AG04450 (cell line): ENCODE measurements at regions of chr1 and their contacts with region 1.

Region 1: GRCh38 chr1:173867753-173868265 is at the start of gene GAS5:
- DNase-seq: peak; percentile 99
- H3K4me3 ChIP-seq: peak within 1 kb of the TSS; percentile 95
- H3K27ac ChIP-seq: peak within 1 kb of the TSS; percentile 79
- H3K27me3 ChIP-seq: no peaks in the 10 kb centered on the region
- CTCF ChIP-seq: no peak
- polyA plus RNA-seq, gene GAS5: 976 and 1,191 TPM in 2 replicates

Region 2: GRCh38 chr1:173779936-173780335 is 87.9 kb before region 1 on chr1:
- CTCF ChIA-PET with region 1: no interaction called
- POLR2A ChIA-PET with region 1: no interaction called
- DNase-seq: no peak
- H3K4me3 ChIP-seq: no peak overlapping the region
- H3K27ac ChIP-seq: no peak overlapping the region
- H3K27me3 ChIP-seq: no peaks in the 10 kb centered on the region
- CTCF ChIP-seq: no peak

Region 3: DNA sequence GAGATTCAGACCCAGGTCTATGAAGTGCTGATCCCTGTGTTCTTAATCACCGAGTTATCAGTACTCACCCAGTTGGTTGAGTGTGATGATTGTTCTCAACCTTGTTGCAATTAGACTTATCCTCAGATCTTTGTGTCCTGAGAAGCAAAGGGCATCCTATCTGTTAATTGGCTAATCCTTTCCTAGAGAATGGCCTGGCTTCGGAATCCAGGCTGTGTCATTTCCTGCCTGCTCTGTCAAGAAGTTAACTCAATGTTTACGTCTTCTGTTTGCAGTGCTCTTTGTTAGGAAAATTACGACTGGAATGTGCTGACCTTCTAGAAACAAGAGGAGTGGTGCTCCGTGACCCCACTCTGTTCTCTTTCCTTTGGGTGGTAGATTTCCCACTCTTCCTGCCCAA is 14.7 kb before region 1 on chr1:
- CTCF ChIA-PET with region 1: interaction called, 3 read pairs
- POLR2A ChIA-PET with region 1: interaction called, 32 read pairs
- DNase-seq: peak; percentile 46
- H3K4me3 ChIP-seq: no peak overlapping the region
- H3K27ac ChIP-seq: peak overlapping the region; percentile 66
- H3K27me3 ChIP-seq: no peaks in the 10 kb centered on the region
- CTCF ChIP-seq: no peak

Region 4: GRCh38 chr1:173934440-173934839 is 66.6 kb after region 1 on chr1:
- CTCF ChIA-PET with region 1: no interaction called
- POLR2A ChIA-PET with region 1: no interaction called
- DNase-seq: no peak
- H3K4me3 ChIP-seq: no peak overlapping the region
- H3K27ac ChIP-seq: no peak overlapping the region
- H3K27me3 ChIP-seq: no peaks in the 10 kb centered on the region
- CTCF ChIP-seq: no peak